Astrocyte of the cerebellum (primary cell): ENCODE measurements at regions of chr17 and their contacts with region 1.

Region 1: DNA sequence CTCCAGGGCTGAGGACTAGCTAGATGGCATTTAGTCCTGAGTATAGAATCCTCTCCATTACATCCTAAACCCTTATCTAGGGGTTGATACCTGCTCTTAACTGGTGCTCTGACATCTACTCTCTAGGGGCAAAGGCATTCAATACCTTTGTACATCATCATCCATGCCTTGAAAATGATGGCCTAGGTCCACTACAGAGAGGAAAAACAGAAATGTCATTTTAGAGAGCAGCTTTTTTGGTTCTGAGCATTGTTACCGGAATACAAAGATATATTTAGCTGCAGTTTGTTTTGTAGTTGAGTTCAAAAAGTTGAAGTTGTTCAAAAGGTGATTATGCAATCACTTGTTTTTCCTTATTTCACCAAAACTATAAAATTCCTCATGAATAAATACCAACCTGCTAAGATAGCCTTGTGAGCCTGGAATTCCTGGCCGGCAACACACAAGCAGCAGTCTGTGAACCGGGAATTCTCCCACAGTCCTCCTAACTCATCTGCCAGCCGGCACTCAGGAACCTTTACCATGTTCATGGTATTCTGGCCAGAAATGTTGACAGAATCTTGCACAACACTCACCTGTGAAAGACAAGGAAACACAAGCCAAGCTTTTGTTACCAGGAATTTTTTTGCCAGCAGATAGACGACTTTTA is 35.3 kb downstream of the NXPH3 start:
- DNase-seq: no peak
- H3K4me3 ChIP-seq: no peak overlapping the region
- CTCF ChIP-seq: no peak

Region 2: GRCh38 chr17:49646391-49647255 is 35.6 kb after region 1 on chr17:
- in situ Hi-C with region 1: loop called (anchors 5 kb)
- DNase-seq: peak; percentile 53
- H3K4me3 ChIP-seq: peak overlapping the region; percentile 9
- CTCF ChIP-seq: no peak

Region 3: DNA sequence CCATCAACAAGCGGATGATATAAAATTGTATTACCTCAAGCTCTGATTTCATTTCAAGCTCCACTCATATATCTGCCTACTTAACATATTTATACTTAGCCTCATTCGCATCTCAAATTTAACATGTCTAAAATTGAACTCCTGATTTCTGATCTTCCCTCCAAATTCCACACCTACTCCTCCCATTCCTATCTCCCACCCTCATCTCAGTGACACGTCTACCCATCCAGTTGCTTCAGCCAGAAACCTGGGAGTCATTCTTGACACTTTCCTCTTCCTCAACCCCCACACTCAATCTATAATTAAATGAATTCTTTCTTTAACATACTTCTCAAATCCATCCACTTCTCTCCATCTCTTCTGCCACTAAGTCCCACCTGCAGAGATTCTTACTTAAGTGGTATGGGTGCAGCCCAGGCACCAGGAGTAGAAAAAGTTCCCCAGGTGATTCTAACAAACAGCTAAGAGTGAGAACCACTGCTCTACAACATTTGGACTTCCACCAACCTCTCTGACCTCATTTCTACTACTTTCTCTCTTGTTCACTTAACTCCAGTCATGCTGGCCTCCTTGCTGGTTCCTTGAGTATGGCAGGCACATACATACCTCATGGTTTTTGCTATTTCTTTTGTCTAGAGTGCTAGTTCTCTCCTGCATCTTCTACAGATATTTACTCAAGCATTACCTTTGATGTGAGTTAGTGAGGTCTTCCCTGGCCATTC is 48.8 kb after region 1 on chr17:
- in situ Hi-C with region 1: no loop called
- DNase-seq: no peak
- H3K4me3 ChIP-seq: no peak overlapping the region
- CTCF ChIP-seq: no peak